SK-N-SH (cell line): ENCODE measurements at regions of chr16 and their contacts with region 1.

Region 1: DNA sequence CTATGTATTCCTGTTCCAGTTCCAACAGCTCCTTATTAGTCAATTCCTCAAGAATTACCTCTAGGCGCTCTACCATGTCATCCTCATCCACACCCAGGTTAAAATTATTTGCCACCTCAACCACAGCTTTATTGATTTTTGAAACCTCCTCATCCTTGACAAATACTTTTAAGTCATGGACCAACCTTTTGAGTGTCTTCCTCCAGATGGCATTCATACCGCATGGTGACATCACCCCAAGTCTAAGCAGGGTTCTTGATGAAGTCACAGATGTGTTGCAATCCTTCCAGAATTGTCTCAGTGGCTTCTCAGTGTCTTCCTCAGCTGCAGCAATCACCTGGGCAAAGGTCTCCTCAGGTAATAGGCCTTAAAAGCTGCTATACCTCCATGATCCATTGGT is 40.1 kb downstream of the BCL7C start:
- DNase-seq: no peak
- H3K4me3 ChIP-seq: no peak overlapping the region
- H3K27ac ChIP-seq: no peak overlapping the region
- H3K4me1 ChIP-seq: no peaks in the 10 kb centered on the region
- H3K27me3 ChIP-seq: no peaks in the 10 kb centered on the region
- CTCF ChIP-seq: no peak
- EP300 ChIP-seq: no peak
- RAD21 ChIP-seq: no peak

Region 2: GRCh38 chr16:30829130-30830071 is 24.4 kb before region 1 on chr16:
- CTCF ChIA-PET with region 1: no interaction called
- POLR2A ChIA-PET with region 1: no interaction called
- DNase-seq: no peak
- H3K4me3 ChIP-seq: no peak overlapping the region
- H3K27ac ChIP-seq: no peak overlapping the region
- H3K4me1 ChIP-seq: no peaks in the 10 kb centered on the region
- H3K27me3 ChIP-seq: no peaks in the 10 kb centered on the region
- CTCF ChIP-seq: no peak
- EP300 ChIP-seq: no peak
- RAD21 ChIP-seq: no peak

Region 3: GRCh38 chr16:30867747-30868146 is 14.0 kb after region 1 on chr16:
- CTCF ChIA-PET with region 1: interaction called, 13 read pairs
- POLR2A ChIA-PET with region 1: interaction called, 3 read pairs
- DNase-seq: peak; percentile 34
- H3K4me3 ChIP-seq: peak overlapping the region in 1 of 2 experiments; percentile 16; a peak in 1 of 4 replicates
- H3K27ac ChIP-seq: no peak overlapping the region
- H3K4me1 ChIP-seq: no peaks in the 10 kb centered on the region
- H3K27me3 ChIP-seq: no peaks in the 10 kb centered on the region
- CTCF ChIP-seq: peak; percentile 42
- EP300 ChIP-seq: no peak
- RAD21 ChIP-seq: peak; percentile 19; the same call in 1 of the 2 replicates

Region 4: DNA sequence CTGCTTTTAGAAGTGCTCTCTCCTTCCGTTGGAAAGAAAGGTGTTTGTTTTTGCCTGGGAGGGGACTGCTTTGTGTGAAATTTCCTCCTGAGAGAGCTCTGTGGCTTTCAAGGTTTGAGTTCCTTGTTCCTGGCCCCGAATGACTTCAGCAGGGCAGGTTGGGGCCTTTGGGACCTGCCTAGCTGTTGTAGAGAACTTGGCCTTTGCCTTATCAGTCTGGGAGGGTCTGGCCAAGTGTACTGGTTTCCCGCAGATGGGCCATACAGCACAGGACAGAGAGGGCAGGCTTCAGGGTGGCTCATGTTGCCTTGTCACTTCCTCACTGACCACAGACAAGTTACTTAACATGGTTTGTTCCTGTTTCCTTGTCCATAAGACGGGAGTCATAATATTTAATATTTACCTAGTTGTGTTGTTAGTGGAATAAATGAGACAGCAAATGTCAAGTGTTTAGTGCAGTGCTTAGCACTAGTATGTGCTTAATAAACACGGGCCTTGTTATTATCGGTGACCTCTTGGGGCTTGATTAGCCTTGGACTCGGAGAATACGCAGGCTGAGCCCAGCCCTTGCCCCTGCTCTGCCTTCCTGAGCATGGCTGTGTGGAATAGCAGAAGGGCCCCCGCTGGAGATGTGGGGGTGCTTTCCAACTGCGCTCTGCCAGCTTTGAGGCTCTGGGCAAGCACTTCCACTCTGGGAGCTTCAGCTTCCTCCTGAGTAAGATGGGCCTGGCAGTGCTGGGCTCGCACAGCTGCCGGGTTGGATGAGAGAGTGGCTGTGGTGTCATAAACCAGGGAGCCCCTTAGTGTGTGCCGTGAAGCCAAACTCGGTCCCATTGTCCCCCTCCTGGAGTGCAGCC is 275.2 kb after region 1 on chr16:
- CTCF ChIA-PET with region 1: no interaction called
- POLR2A ChIA-PET with region 1: no interaction called
- DNase-seq: no peak
- H3K4me3 ChIP-seq: no peak overlapping the region
- H3K27ac ChIP-seq: no peak overlapping the region
- H3K4me1 ChIP-seq: peaks cover 0 to 7% of the 10 kb centered on the region in 2 experiments; a peak in 1 of 4 replicates
- H3K27me3 ChIP-seq: no peaks in the 10 kb centered on the region
- CTCF ChIP-seq: no peak
- EP300 ChIP-seq: no peak
- RAD21 ChIP-seq: no peak